ENCODE measurements at regions of chr1 and their contacts with region 1.

Region 1: GRCh38 chr1:31815752-31816500 is at the start of gene SPOCD1:
- DNase-seq: peak; percentile 83
- ATAC-seq: peak; percentile 97
- H3K4me3 ChIP-seq: peak within 1 kb of the TSS; percentile 54 to 60
- H3K27ac ChIP-seq: no peak within 1 kb of the TSS; the same call in 1 of the 2 replicates
- H3K4me1 ChIP-seq: peaks cover 3 to 12% of the 10 kb centered on the region in 2 experiments; a peak in 3 of 4 replicates
- H3K27me3 ChIP-seq: no peaks in the 10 kb centered on the region
- CTCF ChIP-seq: peak; percentile 90 to 96 (median 95)
- POLR2A ChIP-seq: peak; percentile 36
- RAD21 ChIP-seq: peak; percentile 96
- total RNA-seq, gene SPOCD1: 5.0 TPM

Region 2: DNA sequence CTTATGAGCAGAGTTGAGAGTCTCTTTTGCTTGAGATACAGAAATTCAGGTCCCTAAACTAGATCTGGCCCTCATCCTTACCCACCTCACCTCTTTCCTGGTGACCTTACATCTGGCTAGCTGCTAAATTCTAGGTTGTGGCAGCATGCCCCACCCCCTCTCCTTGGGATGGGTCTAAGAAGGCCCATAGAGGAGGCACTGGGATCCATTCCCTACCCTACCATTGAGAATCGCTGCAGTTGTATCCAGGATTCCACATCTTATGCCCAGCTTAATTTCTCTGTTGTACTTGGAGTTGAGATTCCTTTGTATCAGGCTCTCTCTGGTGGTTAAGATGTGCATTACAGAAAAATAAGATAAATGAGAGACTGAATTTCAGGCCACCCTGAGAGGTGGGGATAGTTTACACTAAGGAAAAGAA is 247.3 kb after region 1 on chr1:
- CTCF ChIA-PET with region 1: interaction called, 3 read pairs
- POLR2A ChIA-PET with region 1: no interaction called
- RAD21 ChIA-PET with region 1: interaction called in 1 of 2 experiments, 3 read pairs
- intact Hi-C with region 1: loop called (anchors 10 kb)
- DNase-seq: peak; percentile 32
- ATAC-seq: peak; percentile 61
- H3K4me3 ChIP-seq: no peak overlapping the region
- H3K27ac ChIP-seq: peak overlapping the region; percentile 57
- H3K4me1 ChIP-seq: peaks cover 31 to 33% of the 10 kb centered on the region in 2 experiments
- H3K27me3 ChIP-seq: no peaks in the 10 kb centered on the region
- CTCF ChIP-seq: peak; percentile 41 to 65 (median 59); a peak in 5 of 6 replicates
- POLR2A ChIP-seq: no peak
- RAD21 ChIP-seq: peak; percentile 86